OCI-LY7 (cell line): ENCODE measurements at regions of chr2 and their contacts with region 1.

Region 1: DNA sequence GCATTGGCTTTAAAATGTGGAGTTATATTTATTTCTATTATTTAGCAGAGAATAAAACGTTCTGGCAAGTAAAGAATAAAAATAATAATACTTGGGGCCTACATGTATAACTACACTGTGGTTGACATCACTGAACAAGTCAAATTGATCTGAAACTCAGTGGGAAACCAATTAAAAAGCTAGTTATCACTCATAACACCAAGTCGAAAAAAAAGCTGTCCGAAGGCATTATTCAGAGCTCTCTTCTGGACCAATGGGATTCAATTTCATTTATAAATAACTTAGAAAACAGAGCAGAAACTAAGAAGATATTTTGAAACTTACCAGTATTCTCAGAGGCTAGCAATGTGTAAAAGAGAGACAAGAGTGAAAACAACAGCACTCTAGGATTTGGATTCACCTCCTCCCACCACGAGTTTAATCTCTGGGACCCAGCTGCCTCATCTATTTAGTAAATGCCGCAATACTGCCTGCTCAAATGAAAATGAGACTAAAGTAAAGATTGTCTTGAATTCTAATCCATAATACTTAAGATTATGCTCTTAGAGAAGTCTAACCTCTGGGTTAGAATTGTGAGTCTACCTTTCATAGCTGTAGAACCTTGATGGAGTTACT is 128.4 kb downstream of the NBAS start:
- DNase-seq: no peak
- H3K4me3 ChIP-seq: no peak overlapping the region
- H3K27ac ChIP-seq: no peak overlapping the region
- H3K4me1 ChIP-seq: peaks cover 7% of the 10 kb centered on the region
- CTCF ChIP-seq: no peak

Region 2: GRCh38 chr2:15560988-15561573 is 128.3 kb after region 1 on chr2 and contains the start of gene NBAS:
- CTCF ChIA-PET with region 1: interaction called, 15 read pairs
- POLR2A ChIA-PET with region 1: no interaction called
- intact Hi-C with region 1: no loop called
- DNase-seq: peak; percentile 81
- H3K4me3 ChIP-seq: peak within 1 kb of the TSS; percentile 91
- H3K27ac ChIP-seq: no peak within 1 kb of the TSS
- H3K4me1 ChIP-seq: peaks cover 16% of the 10 kb centered on the region
- CTCF ChIP-seq: no peak
- total RNA-seq, gene NBAS: 23.2 and 28.8 TPM in 2 replicates